ENCODE measurements at regions of chr15 and their contacts with region 1.

Region 1: GRCh38 chr15:77543159-77543882 is 89.4 kb downstream of the LINGO1 start:
- DNase-seq: peak; percentile 88
- ATAC-seq: peak; percentile 94
- H3K4me3 ChIP-seq: peak overlapping the region in 4 of 5 experiments; percentile 56 to 73 (median 62)
- H3K4me3 Mint-ChIP-seq: peak overlapping the region; percentile 80
- H3K27ac ChIP-seq: peak overlapping the region in 1 of 2 donors; percentile 67
- H3K27ac Mint-ChIP-seq: peak overlapping the region; percentile 61
- H3K4me1 ChIP-seq: peaks cover 22 to 39% of the 10 kb centered on the region in 2 donors
- H3K4me1 Mint-ChIP-seq: peaks cover 41% of the 10 kb centered on the region
- H3K27me3 ChIP-seq: peaks cover 0 to 2% (median 0%) of the 10 kb centered on the region in 4 experiments
- H3K27me3 Mint-ChIP-seq: no peaks in the 10 kb centered on the region
- CTCF ChIP-seq: peak; percentile 99

Region 2: DNA sequence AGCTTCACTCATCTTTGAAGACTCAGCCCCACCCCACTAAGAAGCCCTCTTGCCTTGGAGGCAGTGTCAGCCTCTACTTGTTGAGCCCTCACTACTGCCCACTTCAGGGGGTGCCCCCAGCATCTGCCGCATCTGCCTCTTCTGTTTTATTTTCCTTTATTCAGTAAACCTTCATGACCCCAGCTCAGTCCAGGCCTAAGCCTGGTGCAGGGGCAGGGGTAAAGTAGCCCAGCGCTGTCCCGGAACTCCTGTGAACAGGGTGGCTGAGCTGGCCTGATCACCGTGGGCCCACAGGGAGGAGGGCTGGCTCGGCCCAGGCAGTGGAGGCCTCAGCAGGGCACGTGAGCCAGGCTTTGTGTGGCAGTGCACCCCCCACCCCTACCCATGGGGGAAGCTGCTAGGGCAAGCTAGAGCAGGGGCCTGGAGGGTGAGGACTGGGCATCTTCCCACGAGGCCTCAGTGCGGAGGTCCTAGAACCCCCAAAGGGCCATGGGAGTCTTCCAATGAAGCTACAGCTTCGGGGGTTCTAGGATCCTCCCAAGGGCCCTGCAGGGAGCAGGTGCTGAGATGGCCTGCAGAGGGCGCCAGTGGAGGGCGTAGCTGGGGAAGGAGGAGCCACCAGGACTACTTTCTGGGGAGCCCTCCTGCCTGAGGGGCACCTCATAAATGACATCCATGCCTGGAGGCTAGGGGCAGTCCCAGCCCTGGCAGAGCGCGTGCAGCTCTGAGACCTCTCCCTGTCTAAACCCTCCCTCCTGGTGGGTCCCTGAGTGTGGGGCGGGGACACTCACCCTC is 508.4 kb before region 1 on chr15:
- CTCF ChIA-PET with region 1: interaction called, 19 read pairs
- POLR2A ChIA-PET with region 1: interaction called, 5 read pairs
- intact Hi-C with region 1: no loop called
- DNase-seq: peak; percentile 65
- ATAC-seq: peak; percentile 22
- H3K4me3 ChIP-seq: no peak overlapping the region
- H3K4me3 Mint-ChIP-seq: no peak overlapping the region
- H3K27ac ChIP-seq: peak overlapping the region; percentile 22 to 57
- H3K27ac Mint-ChIP-seq: peak overlapping the region; percentile 75
- H3K4me1 ChIP-seq: peaks cover 12 to 37% of the 10 kb centered on the region in 2 donors
- H3K4me1 Mint-ChIP-seq: peaks cover 18% of the 10 kb centered on the region
- H3K27me3 ChIP-seq: no peaks in the 10 kb centered on the region
- H3K27me3 Mint-ChIP-seq: no peaks in the 10 kb centered on the region
- CTCF ChIP-seq: peak; percentile 78

Region 3: GRCh38 chr15:77112838-77113504 is 430.4 kb before region 1 on chr15:
- CTCF ChIA-PET with region 1: interaction called, 187 read pairs
- POLR2A ChIA-PET with region 1: no interaction called
- intact Hi-C with region 1: loop called (anchors 1 kb)
- DNase-seq: no peak
- ATAC-seq: no peak
- H3K4me3 ChIP-seq: no peak overlapping the region
- H3K4me3 Mint-ChIP-seq: no peak overlapping the region
- H3K27ac ChIP-seq: no peak overlapping the region
- H3K27ac Mint-ChIP-seq: no peak overlapping the region
- H3K4me1 ChIP-seq: peaks cover 0 to 8% of the 10 kb centered on the region in 2 donors
- H3K4me1 Mint-ChIP-seq: peaks cover 10% of the 10 kb centered on the region
- H3K27me3 ChIP-seq: no peaks in the 10 kb centered on the region
- H3K27me3 Mint-ChIP-seq: no peaks in the 10 kb centered on the region
- CTCF ChIP-seq: no peak

Region 4: DNA sequence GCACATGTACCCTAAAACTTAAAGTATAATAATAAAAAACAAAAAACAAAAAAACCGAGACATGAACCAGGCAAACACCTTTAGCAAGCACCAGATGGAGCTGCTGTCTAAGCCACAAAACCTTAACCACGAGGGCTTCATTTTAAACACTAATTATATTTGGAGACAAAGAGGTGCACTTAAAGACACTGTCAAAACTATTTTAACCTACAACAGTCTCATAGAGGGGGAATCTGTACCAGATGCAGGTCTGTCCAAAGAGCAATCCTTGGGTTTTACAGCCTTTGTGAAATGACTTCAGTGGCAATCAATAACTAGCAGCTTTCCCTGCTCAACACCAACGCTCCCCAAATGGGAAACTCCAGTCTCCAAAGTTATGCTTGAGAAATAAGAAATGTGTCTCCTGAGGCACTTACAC is 356.7 kb before region 1 on chr15:
- CTCF ChIA-PET with region 1: interaction called, 252 read pairs
- POLR2A ChIA-PET with region 1: interaction called, 3 read pairs
- intact Hi-C with region 1: loop called (anchors 1 kb)
- DNase-seq: peak; percentile 60
- ATAC-seq: no peak
- H3K4me3 ChIP-seq: no peak overlapping the region
- H3K4me3 Mint-ChIP-seq: no peak overlapping the region
- H3K27ac ChIP-seq: peak overlapping the region; percentile 79 to 80
- H3K27ac Mint-ChIP-seq: peak overlapping the region; percentile 53
- H3K4me1 ChIP-seq: peaks cover 76% of the 10 kb centered on the region in 2 donors
- H3K4me1 Mint-ChIP-seq: peaks cover 66% of the 10 kb centered on the region
- H3K27me3 ChIP-seq: no peaks in the 10 kb centered on the region
- H3K27me3 Mint-ChIP-seq: no peaks in the 10 kb centered on the region
- CTCF ChIP-seq: peak; percentile 76

Region 5: GRCh38 chr15:77496710-77497103 is 46.6 kb before region 1 on chr15:
- CTCF ChIA-PET with region 1: interaction called, 131 read pairs
- POLR2A ChIA-PET with region 1: no interaction called
- intact Hi-C with region 1: loop called (anchors 1 kb)
- DNase-seq: peak; percentile 78
- ATAC-seq: peak; percentile 75
- H3K4me3 ChIP-seq: no peak overlapping the region
- H3K4me3 Mint-ChIP-seq: no peak overlapping the region
- H3K27ac ChIP-seq: no peak overlapping the region
- H3K27ac Mint-ChIP-seq: no peak overlapping the region
- H3K4me1 ChIP-seq: peaks cover 19 to 27% of the 10 kb centered on the region in 2 donors
- H3K4me1 Mint-ChIP-seq: peaks cover 30% of the 10 kb centered on the region
- H3K27me3 ChIP-seq: no peaks in the 10 kb centered on the region
- H3K27me3 Mint-ChIP-seq: no peaks in the 10 kb centered on the region
- CTCF ChIP-seq: peak; percentile 90

Measured in B cell (primary cell).